GM12878 (cell line): ENCODE measurements at regions of chr10 and their contacts with region 1.

Region 1: GRCh38 chr10:123132576-123133477 is 2.9 kb upstream of the HMX3 start:
- DNase-seq: peak; percentile 40
- ATAC-seq: peak; percentile 88
- H3K4me3 ChIP-seq: peak overlapping the region; percentile 86
- H3K27ac ChIP-seq: no peak overlapping the region
- H3K4me1 ChIP-seq: peaks cover 7% of the 10 kb centered on the region
- H3K27me3 ChIP-seq: peaks cover 2 to 15% of the 10 kb centered on the region in 2 experiments; a peak in 2 of 4 replicates
- CTCF ChIP-seq: peak; percentile 90 to 97 (median 94); a peak in 5 of 6 replicates
- EP300 ChIP-seq: no peak
- POLR2A ChIP-seq: no peak
- RAD21 ChIP-seq: peak; percentile 85

Region 2: GRCh38 chr10:123100030-123100762 is 32.6 kb before region 1 on chr10:
- CTCF ChIA-PET with region 1: no interaction called
- POLR2A ChIA-PET with region 1: no interaction called
- RAD21 ChIA-PET with region 1: no interaction called
- SMC1A ChIA-PET with region 1: no interaction called
- in situ Hi-C with region 1: no loop called
- intact Hi-C with region 1: no loop called
- DNase-seq: no peak
- ATAC-seq: no peak
- H3K4me3 ChIP-seq: no peak overlapping the region
- H3K27ac ChIP-seq: no peak overlapping the region
- H3K4me1 ChIP-seq: no peaks in the 10 kb centered on the region
- H3K27me3 ChIP-seq: no peaks in the 10 kb centered on the region; a peak in 2 of 4 replicates
- CTCF ChIP-seq: no peak
- EP300 ChIP-seq: no peak
- POLR2A ChIP-seq: no peak
- RAD21 ChIP-seq: no peak

Region 3: GRCh38 chr10:123380497-123381085 is 247.8 kb after region 1 on chr10:
- CTCF ChIA-PET with region 1: interaction called, 13 read pairs
- POLR2A ChIA-PET with region 1: no interaction called
- RAD21 ChIA-PET with region 1: no interaction called
- SMC1A ChIA-PET with region 1: interaction called, 4 read pairs
- in situ Hi-C with region 1: no loop called
- intact Hi-C with region 1: no loop called
- DNase-seq: no peak
- ATAC-seq: peak; percentile 50; the same call in 1 of the 3 replicates
- H3K4me3 ChIP-seq: no peak overlapping the region
- H3K27ac ChIP-seq: no peak overlapping the region
- H3K4me1 ChIP-seq: no peaks in the 10 kb centered on the region
- H3K27me3 ChIP-seq: no peaks in the 10 kb centered on the region
- CTCF ChIP-seq: peak; percentile 32 to 48 (median 39); a peak in 5 of 6 replicates
- EP300 ChIP-seq: no peak
- POLR2A ChIP-seq: no peak
- RAD21 ChIP-seq: peak; percentile 69

Region 4: DNA sequence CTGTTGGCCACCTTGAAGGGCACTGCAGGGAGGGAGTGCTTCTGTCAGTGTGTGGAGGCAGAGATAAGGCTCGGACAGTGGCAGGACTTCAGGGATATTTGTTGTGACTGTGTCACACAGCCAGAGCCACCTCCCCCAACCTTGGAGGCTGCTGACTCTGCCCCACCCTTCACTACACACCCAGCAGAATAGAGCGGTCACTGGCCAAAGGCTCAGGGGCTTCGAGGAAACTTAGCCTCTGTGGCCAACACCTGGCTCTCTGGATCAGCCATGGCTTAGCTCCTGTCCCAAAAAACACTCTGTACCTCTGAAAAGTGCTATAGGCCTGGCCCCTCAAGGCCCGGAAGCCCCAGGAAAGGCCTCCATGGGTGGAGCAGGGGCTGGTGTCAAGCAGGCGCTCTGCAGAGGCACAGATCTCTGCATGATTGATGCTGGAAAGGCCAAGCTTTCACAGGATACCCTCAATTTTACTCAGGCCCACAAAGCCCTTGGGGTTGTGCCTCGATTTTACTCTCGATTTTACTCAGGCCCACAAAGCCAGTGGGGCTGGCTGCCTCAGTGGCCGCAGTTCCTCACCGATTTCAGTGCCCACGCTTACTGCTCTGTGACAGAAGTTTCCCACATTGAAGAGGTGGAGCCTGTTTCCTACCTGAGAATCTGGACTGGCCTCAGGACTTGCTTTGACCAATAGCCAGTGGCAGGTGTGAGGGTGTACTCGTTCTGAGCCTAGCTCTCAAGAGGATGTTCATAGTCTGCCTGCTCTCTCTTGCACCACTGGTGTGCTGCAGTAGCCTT is 420.1 kb after region 1 on chr10:
- CTCF ChIA-PET with region 1: interaction called, 33 read pairs
- POLR2A ChIA-PET with region 1: no interaction called
- RAD21 ChIA-PET with region 1: interaction called, 20 read pairs
- SMC1A ChIA-PET with region 1: interaction called, 11 read pairs
- in situ Hi-C with region 1: loop called (anchors 5 kb)
- intact Hi-C with region 1: no loop called
- DNase-seq: peak; percentile 81
- ATAC-seq: peak; percentile 84
- H3K4me3 ChIP-seq: 0 out of 2 replicates have a peak overlapping the region, but pooled peaks have one; percentile 2
- H3K27ac ChIP-seq: peak overlapping the region; percentile 85
- H3K4me1 ChIP-seq: peaks cover 74% of the 10 kb centered on the region
- H3K27me3 ChIP-seq: no peaks in the 10 kb centered on the region
- CTCF ChIP-seq: no peak
- EP300 ChIP-seq: peak; percentile 42 to 51; a peak in 2 of 4 replicates
- POLR2A ChIP-seq: 0 out of 2 replicates have a peak, but pooled peaks have one; percentile 38
- RAD21 ChIP-seq: no peak

Region 5: DNA sequence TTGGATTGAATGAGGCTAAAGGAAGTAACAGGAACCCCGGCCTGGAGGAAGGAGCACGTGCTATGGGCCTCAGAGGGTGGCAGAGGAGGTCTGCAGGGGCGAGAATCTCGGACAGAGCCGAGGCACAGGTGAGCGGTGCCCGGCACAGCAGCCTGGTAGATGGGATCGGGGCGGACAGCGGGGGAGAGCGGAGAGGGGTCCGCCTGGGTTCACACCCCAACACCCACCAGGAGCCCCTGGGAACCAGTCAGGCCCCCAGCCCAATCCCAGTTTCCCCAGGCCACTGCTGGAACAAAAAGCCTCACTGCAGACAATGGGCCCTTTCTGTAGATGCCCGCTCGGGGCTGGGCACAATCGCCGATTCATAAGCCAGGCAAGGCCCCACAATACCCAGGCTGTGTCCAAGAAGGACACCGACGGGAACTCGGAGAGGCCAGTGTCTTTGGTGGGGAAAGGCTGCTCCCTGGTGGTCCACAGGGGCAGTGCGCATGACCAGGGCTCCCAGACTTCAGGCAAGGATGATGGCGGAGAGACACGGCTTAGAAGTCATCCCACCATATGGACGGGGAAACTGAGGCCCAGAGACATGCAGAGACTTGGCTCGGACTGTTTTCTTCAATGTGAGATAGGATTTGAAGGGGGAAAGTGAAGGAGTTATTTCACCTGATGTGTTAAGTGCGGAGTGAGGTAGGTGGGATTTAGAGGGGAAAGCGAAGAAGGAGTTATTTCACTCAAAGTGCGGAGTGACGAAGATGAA is 426.4 kb after region 1 on chr10:
- CTCF ChIA-PET with region 1: interaction called, 33 read pairs
- POLR2A ChIA-PET with region 1: no interaction called
- RAD21 ChIA-PET with region 1: interaction called, 20 read pairs
- SMC1A ChIA-PET with region 1: interaction called, 11 read pairs
- in situ Hi-C with region 1: loop called (anchors 5 kb)
- intact Hi-C with region 1: loop called (anchors 1 kb)
- DNase-seq: no peak
- ATAC-seq: peak; percentile 91
- H3K4me3 ChIP-seq: no peak overlapping the region
- H3K27ac ChIP-seq: peak overlapping the region; percentile 18; the same call in 1 of the 2 replicates
- H3K4me1 ChIP-seq: peaks cover 45% of the 10 kb centered on the region
- H3K27me3 ChIP-seq: no peaks in the 10 kb centered on the region; a peak in 1 of 4 replicates
- CTCF ChIP-seq: peak; percentile 84 to 98 (median 98)
- EP300 ChIP-seq: no peak
- POLR2A ChIP-seq: no peak
- RAD21 ChIP-seq: peak; percentile 100

Region 6: GRCh38 chr10:123967396-123968243 is 834.8 kb after region 1 on chr10:
- CTCF ChIA-PET with region 1: no interaction called
- POLR2A ChIA-PET with region 1: no interaction called
- RAD21 ChIA-PET with region 1: no interaction called
- SMC1A ChIA-PET with region 1: no interaction called
- in situ Hi-C with region 1: loop called (anchors 5 kb)
- intact Hi-C with region 1: no loop called
- DNase-seq: no peak
- ATAC-seq: peak; percentile 96
- H3K4me3 ChIP-seq: no peak overlapping the region
- H3K27ac ChIP-seq: no peak overlapping the region
- H3K4me1 ChIP-seq: no peaks in the 10 kb centered on the region
- H3K27me3 ChIP-seq: no peaks in the 10 kb centered on the region; a peak in 1 of 4 replicates
- CTCF ChIP-seq: peak; percentile 90 to 93 (median 91)
- EP300 ChIP-seq: no peak
- POLR2A ChIP-seq: no peak
- RAD21 ChIP-seq: peak; percentile 96